ENCODE measurements at regions of chr16 and their contacts with region 1.

Region 1: GRCh38 chr16:50326949-50327402 is 41.8 kb downstream of the BRD7 start:
- DNase-seq: peak; percentile 32 to 92 (median 76)
- ATAC-seq: peak; percentile 91
- H3K4me3 ChIP-seq: no peak overlapping the region
- H3K4me3 Mint-ChIP-seq: no peak overlapping the region
- H3K27ac ChIP-seq: peak overlapping the region in 1 of 2 experiments; percentile 60
- H3K27ac Mint-ChIP-seq: peak overlapping the region; percentile 88
- H3K4me1 ChIP-seq: peaks cover 24% of the 10 kb centered on the region
- H3K4me1 Mint-ChIP-seq: peaks cover 74% of the 10 kb centered on the region
- H3K27me3 ChIP-seq: no peaks in the 10 kb centered on the region
- H3K27me3 Mint-ChIP-seq: no peaks in the 10 kb centered on the region
- CTCF ChIP-seq: peak; percentile 76

Region 2: GRCh38 chr16:50266337-50267091 is 60.5 kb before region 1 on chr16 and contains the start of gene ADCY7:
- CTCF ChIA-PET with region 1: interaction called, 23 read pairs
- POLR2A ChIA-PET with region 1: no interaction called
- intact Hi-C with region 1: loop called in 1 of 2 experiments (anchors 1 kb)
- DNase-seq: peak; percentile 58 to 90 (median 88)
- ATAC-seq: peak; percentile 83
- H3K4me3 ChIP-seq: peak within 1 kb of the TSS; percentile 91 to 94
- H3K4me3 Mint-ChIP-seq: peak within 1 kb of the TSS; percentile 97
- H3K27ac ChIP-seq: peak within 1 kb of the TSS; percentile 77 to 86
- H3K27ac Mint-ChIP-seq: peak within 1 kb of the TSS; percentile 98
- H3K4me1 ChIP-seq: peaks cover 68% of the 10 kb centered on the region
- H3K4me1 Mint-ChIP-seq: peaks cover 71% of the 10 kb centered on the region
- H3K27me3 ChIP-seq: no peaks in the 10 kb centered on the region
- H3K27me3 Mint-ChIP-seq: no peaks in the 10 kb centered on the region
- CTCF ChIP-seq: no peak
- total RNA-seq, gene ADCY7: 117 to 126 TPM

Region 3: GRCh38 chr16:50281964-50282538 is 44.9 kb before region 1 on chr16:
- CTCF ChIA-PET with region 1: interaction called, 10 read pairs
- POLR2A ChIA-PET with region 1: interaction called, 3 read pairs
- intact Hi-C with region 1: no loop called
- DNase-seq: peak; percentile 43 to 88 (median 71)
- ATAC-seq: peak; percentile 62
- H3K4me3 ChIP-seq: peak overlapping the region; percentile 40 to 46
- H3K4me3 Mint-ChIP-seq: peak overlapping the region; percentile 76
- H3K27ac ChIP-seq: peak overlapping the region; percentile 46 to 70
- H3K27ac Mint-ChIP-seq: peak overlapping the region; percentile 89
- H3K4me1 ChIP-seq: peaks cover 90% of the 10 kb centered on the region
- H3K4me1 Mint-ChIP-seq: peaks cover 89% of the 10 kb centered on the region
- H3K27me3 ChIP-seq: no peaks in the 10 kb centered on the region
- H3K27me3 Mint-ChIP-seq: no peaks in the 10 kb centered on the region
- CTCF ChIP-seq: no peak

Region 4: GRCh38 chr16:50354629-50355456 is 27.9 kb after region 1 on chr16:
- CTCF ChIA-PET with region 1: interaction called, 217 read pairs
- POLR2A ChIA-PET with region 1: interaction called, 12 read pairs
- intact Hi-C with region 1: loop called (anchors 1 kb)
- DNase-seq: peak in 2 of 9 experiments; percentile 40 to 56
- ATAC-seq: peak; percentile 47
- H3K4me3 ChIP-seq: no peak overlapping the region
- H3K4me3 Mint-ChIP-seq: no peak overlapping the region
- H3K27ac ChIP-seq: no peak overlapping the region
- H3K27ac Mint-ChIP-seq: peak overlapping the region; percentile 60
- H3K4me1 ChIP-seq: no peaks in the 10 kb centered on the region
- H3K4me1 Mint-ChIP-seq: peaks cover 38% of the 10 kb centered on the region
- H3K27me3 ChIP-seq: no peaks in the 10 kb centered on the region
- H3K27me3 Mint-ChIP-seq: no peaks in the 10 kb centered on the region
- CTCF ChIP-seq: peak; percentile 94

Region 5: DNA sequence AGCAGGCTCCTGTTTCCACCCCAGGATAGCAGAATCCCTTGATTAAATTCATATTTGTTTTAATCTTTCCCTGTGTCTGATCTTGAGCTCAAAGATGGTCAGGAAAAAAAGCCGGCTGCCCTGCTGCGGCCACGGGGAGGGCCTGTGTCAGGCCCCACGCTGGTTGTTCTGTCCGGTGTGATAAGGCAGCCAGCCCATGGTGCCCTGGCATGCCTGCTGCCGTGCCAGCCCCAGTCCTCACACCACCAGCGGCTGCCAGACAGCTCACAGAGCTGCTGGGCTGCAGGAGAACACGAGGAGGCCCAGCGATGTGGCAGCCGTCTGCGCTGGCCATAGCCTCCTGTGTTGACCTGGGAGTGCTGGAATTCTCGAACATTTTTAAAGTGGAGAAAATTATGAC is 76.5 kb after region 1 on chr16:
- CTCF ChIA-PET with region 1: no interaction called
- POLR2A ChIA-PET with region 1: no interaction called
- intact Hi-C with region 1: no loop called
- DNase-seq: peak in 2 of 9 experiments; percentile 1 to 35
- ATAC-seq: no peak
- H3K4me3 ChIP-seq: no peak overlapping the region
- H3K4me3 Mint-ChIP-seq: no peak overlapping the region
- H3K27ac ChIP-seq: no peak overlapping the region
- H3K27ac Mint-ChIP-seq: no peak overlapping the region
- H3K4me1 ChIP-seq: no peaks in the 10 kb centered on the region
- H3K4me1 Mint-ChIP-seq: peaks cover 5% of the 10 kb centered on the region
- H3K27me3 ChIP-seq: no peaks in the 10 kb centered on the region
- H3K27me3 Mint-ChIP-seq: peaks cover 2% of the 10 kb centered on the region
- CTCF ChIP-seq: no peak

Region 6: DNA sequence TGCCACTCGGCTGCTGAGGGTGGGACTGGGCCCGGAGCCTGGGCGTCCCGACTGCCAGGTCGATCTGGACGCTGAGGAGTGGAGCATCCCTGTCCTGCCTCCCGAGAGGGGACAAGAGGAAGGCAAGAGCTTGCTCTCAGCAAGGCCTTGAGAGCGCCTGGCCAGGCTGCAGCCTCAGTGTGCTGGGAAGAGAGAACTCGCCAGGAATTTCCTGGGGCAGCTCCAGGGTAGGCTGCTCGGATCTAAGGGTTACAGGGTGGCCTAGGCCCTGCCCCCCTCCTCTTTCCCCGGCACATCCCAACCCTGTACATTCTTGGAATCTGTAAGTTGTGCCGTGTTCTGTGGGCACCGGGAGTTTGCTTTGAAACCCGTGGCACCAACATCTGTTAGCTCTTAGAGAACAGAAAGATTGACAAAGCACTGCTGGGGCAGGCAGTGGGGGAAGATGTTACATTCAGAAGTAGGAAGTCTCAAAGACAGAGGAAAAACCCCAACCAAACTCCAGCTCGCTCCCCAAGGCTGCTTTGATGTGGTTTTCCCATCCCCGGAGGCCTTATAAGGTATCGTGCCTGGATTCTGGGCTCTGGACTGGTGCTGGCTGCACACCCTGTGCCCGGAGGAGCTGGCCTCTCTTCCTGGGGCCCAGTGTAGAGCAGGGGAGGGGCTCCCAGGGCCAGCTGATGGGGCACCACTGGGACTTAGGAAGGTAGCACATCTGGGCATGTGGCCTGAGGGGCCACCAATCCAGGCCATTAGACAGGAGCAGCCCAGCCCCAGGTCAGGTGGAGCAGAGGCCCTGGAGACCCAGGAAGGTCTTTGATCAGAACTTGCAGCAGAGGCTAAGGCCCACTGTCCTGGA is 276.5 kb after region 1 on chr16:
- CTCF ChIA-PET with region 1: interaction called, 5 read pairs
- POLR2A ChIA-PET with region 1: no interaction called
- intact Hi-C with region 1: loop called in 1 of 2 experiments (anchors 1 kb)
- DNase-seq: peak in 2 of 9 experiments; percentile 11 to 32
- ATAC-seq: no peak
- H3K4me3 ChIP-seq: no peak overlapping the region
- H3K4me3 Mint-ChIP-seq: peak overlapping the region; percentile 15
- H3K27ac ChIP-seq: no peak overlapping the region
- H3K27ac Mint-ChIP-seq: no peak overlapping the region
- H3K4me1 ChIP-seq: peaks cover 25% of the 10 kb centered on the region
- H3K4me1 Mint-ChIP-seq: peaks cover 30% of the 10 kb centered on the region
- H3K27me3 ChIP-seq: no peaks in the 10 kb centered on the region
- H3K27me3 Mint-ChIP-seq: no peaks in the 10 kb centered on the region
- CTCF ChIP-seq: no peak

Region 7: DNA sequence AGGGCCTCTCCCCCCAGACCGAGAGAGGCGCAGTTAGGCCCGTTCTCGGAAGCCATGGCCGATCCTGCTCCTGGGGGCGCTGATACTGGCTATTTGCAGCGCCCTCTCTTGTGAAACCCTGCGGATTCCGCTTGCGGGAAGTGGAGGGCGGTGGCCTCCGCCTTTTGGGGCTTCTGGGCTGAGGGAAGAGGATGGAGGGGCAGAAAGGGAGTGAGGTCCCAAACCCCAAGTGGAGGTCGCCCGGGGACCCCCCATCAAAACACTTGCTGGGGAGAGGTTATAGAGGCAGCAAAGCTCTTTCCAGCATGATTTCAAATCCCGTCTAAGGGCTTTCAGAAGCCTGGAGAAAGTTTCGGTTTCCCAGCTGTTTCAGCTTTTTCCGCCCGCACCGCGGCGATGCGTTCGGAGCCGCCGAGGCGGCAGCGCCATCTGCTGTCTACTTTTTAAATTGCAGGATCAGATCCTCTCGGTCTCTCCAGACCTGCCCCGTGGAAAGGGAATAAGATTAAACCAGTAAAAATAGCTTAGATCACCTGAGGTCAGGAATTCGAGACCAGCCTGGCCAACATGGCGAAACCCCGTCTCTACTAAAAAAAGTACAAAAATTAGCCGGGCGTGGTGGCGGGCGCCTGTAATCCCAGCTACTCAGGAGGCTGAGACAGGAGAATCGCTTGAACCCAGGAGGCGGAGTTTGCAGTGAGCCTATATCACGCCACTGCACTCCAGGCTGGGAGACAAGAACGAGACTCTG is 338.3 kb after region 1 on chr16:
- CTCF ChIA-PET with region 1: interaction called, 45 read pairs
- POLR2A ChIA-PET with region 1: interaction called, 3 read pairs
- intact Hi-C with region 1: loop called (anchors 1 to 2 kb)
- DNase-seq: peak; percentile 70 to 92 (median 83)
- ATAC-seq: peak; percentile 73
- H3K4me3 ChIP-seq: peak overlapping the region; percentile 39 to 57
- H3K4me3 Mint-ChIP-seq: peak overlapping the region; percentile 82
- H3K27ac ChIP-seq: peak overlapping the region in 1 of 2 experiments; percentile 46
- H3K27ac Mint-ChIP-seq: no peak overlapping the region
- H3K4me1 ChIP-seq: peaks cover 21% of the 10 kb centered on the region
- H3K4me1 Mint-ChIP-seq: peaks cover 36% of the 10 kb centered on the region
- H3K27me3 ChIP-seq: no peaks in the 10 kb centered on the region
- H3K27me3 Mint-ChIP-seq: no peaks in the 10 kb centered on the region
- CTCF ChIP-seq: peak; percentile 93

Region 8: GRCh38 chr16:50806099-50807062 is 479.4 kb after region 1 on chr16:
- CTCF ChIA-PET with region 1: interaction called, 6 read pairs
- POLR2A ChIA-PET with region 1: interaction called, 3 read pairs
- intact Hi-C with region 1: loop called (anchors 1 to 2 kb)
- DNase-seq: peak; percentile 69 to 93 (median 86)
- ATAC-seq: peak; percentile 96
- H3K4me3 ChIP-seq: peak overlapping the region; percentile 36 to 38
- H3K4me3 Mint-ChIP-seq: peak overlapping the region; percentile 81
- H3K27ac ChIP-seq: no peak overlapping the region
- H3K27ac Mint-ChIP-seq: peak overlapping the region; percentile 88
- H3K4me1 ChIP-seq: peaks cover 3% of the 10 kb centered on the region
- H3K4me1 Mint-ChIP-seq: peaks cover 11% of the 10 kb centered on the region
- H3K27me3 ChIP-seq: no peaks in the 10 kb centered on the region
- H3K27me3 Mint-ChIP-seq: no peaks in the 10 kb centered on the region
- CTCF ChIP-seq: peak; percentile 96

Measured in CD8-positive, alpha-beta T cell (primary cell).